ENCODE measurements at regions of chr17 and their contacts with region 1.

Region 1: DNA sequence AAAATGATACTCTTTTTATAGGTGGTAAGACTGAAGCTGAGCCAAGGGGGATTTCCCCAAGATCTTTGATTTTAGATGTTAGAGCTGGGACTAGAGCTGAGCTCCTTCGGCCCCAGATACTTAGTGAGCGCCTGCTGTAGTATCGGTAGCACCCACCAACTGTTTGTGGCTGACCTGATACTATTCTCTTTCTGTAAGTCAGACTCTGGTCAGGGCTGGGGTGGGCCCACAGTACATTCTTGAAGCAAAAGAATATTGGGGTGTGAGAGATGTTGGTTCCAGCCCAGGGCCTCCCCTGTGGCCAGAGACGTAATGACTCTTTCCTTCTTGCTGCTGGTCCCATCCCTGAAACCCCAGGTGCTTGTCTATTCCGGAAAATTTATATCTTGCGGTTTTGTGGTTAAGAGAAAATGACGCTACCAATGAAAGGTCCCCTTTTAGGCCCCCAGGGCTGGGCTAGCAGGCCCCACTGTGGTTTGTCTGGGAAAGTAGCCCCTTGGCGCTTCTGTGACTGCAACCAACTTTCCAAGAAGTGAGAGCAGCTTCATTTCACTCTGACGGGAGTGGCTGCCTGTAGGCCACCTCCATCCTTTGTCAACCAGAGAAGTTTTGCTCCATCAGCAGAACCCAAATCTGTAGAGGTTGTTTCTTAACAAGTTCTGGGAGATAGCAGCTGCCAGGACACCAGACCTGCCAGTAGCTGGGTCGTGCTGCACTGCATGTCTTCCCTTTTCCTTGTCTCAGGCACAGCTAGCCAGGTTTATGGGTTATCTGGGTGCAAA is 86.4 kb upstream of the LGALS9 start:
- DNase-seq: no peak
- H3K4me3 ChIP-seq: no peak overlapping the region
- H3K4me3 Mint-ChIP-seq: no peak overlapping the region
- H3K27ac Mint-ChIP-seq: peak overlapping the region; percentile 85
- H3K4me1 ChIP-seq: peaks cover 45% of the 10 kb centered on the region
- H3K4me1 Mint-ChIP-seq: peaks cover 46% of the 10 kb centered on the region
- H3K27me3 ChIP-seq: no peaks in the 10 kb centered on the region
- H3K27me3 Mint-ChIP-seq: no peaks in the 10 kb centered on the region
- CTCF ChIP-seq: no peak

Region 2: DNA sequence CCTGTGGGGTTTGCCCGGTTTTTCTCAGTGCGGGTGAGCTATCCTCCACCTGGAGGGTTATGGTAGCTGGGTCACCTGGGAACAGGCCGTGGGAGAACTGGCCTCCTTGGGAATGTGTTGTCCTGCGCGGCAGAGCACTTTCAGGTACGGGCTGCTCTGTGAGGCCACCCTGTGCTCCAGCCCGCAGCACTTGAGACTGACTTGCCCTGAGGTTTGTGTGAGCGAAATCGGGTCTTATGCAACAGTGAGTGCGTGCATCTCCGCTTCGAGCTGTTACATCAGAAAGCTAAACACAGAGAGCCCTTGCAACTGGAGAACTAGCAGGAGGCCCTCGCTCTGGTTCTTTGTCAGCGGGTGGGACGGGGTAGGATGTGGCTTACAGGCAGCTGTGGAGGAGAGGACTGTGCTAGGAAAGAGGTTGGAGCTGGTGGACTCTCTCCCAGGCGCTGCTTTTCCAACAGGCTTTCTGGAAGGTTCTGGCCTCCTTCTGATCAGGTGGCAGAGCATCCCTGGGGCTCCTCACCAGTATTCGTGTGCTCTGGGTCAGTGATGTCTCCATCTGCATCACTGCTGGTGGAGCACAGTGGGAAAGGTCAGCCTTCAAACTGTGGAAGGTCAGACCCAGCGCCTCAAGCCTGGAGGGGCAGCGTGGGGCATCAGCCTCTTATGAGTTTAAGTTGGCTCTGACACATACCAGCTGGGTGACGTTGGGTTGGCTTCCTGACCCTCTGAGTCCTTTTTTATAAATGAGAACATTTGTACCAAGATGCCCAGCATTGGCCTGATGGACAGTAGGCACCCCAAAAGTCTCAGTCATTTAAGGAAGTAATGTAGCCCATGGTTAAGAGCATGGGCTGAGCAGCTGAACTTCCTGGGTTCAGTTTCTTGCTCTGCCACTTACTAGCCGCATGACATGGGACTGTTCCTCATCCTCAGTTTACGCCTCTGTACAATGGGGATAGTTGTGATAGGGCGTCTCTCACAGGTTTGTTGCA is 12.0 kb before region 1 on chr17:
- CTCF ChIA-PET with region 1: interaction called, 10 read pairs
- POLR2A ChIA-PET with region 1: interaction called, 4 read pairs
- intact Hi-C with region 1: loop called (anchors 1 kb)
- DNase-seq: peak; percentile 78 to 85
- H3K4me3 ChIP-seq: no peak overlapping the region
- H3K4me3 Mint-ChIP-seq: peak overlapping the region; percentile 15
- H3K27ac Mint-ChIP-seq: peak overlapping the region; percentile 90
- H3K4me1 ChIP-seq: peaks cover 65% of the 10 kb centered on the region
- H3K4me1 Mint-ChIP-seq: peaks cover 75% of the 10 kb centered on the region
- H3K27me3 ChIP-seq: no peaks in the 10 kb centered on the region
- H3K27me3 Mint-ChIP-seq: no peaks in the 10 kb centered on the region
- CTCF ChIP-seq: no peak

Region 3: GRCh38 chr17:27559506-27560481 is 15.3 kb after region 1 on chr17:
- CTCF ChIA-PET with region 1: no interaction called
- POLR2A ChIA-PET with region 1: interaction called, 3 read pairs
- intact Hi-C with region 1: loop called (anchors 2 kb)
- DNase-seq: no peak
- H3K4me3 ChIP-seq: no peak overlapping the region
- H3K4me3 Mint-ChIP-seq: no peak overlapping the region
- H3K27ac Mint-ChIP-seq: peak overlapping the region; percentile 5
- H3K4me1 ChIP-seq: peaks cover 12% of the 10 kb centered on the region
- H3K4me1 Mint-ChIP-seq: peaks cover 22% of the 10 kb centered on the region
- H3K27me3 ChIP-seq: no peaks in the 10 kb centered on the region
- H3K27me3 Mint-ChIP-seq: no peaks in the 10 kb centered on the region
- CTCF ChIP-seq: no peak

Measured in Caco-2 (cell line).